GM13976 (cell line): ENCODE measurements at regions of chr7 and their contacts with region 1.

Region 1: GRCh38 chr7:27196287-27196767 is 3.6 kb downstream of the HOXA13 start:
- DNase-seq: peak; percentile 72
- CTCF ChIP-seq: peak; percentile 75

Region 2: DNA sequence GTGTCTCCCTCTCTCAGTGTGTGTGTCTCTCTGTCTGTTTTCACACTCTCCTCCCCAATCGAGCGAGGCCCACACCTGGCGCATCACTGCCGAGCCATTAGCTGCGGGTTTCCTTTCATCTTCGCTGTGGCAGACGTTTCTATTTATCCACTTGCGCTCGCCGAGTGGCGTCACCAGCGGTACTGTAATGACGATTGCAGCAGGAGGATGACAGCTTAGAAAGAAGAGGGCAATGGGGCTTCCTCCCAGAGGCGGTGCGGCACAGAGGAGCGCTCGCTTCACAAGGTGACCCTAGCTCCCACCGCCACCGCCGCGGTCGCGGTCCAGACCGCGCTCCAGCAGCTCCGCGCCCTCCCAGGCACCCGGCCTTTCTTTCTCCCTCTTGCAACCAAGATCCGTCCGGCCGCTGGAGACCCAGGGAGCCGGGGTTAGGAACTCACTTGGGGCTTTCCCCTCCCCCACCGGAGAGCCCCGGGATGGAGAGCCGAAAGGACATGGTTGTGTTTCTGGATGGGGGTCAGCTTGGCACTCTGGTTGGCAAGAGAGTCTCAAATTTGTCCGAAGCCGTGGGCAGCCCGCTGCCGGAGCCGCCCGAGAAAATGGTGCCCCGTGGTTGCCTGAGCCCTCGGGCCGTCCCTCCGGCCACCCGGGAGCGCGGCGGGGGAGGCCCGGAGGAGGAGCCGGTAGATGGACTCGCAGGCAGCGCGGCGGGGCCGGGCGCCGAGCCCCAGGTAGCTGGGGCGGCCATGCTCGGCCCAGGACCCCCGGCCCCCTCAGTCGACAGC is 46.4 kb after region 1 on chr7 and contains the start of gene EVX1:
- in situ Hi-C with region 1: loop called (anchors 10 kb)
- DNase-seq: no peak
- CTCF ChIP-seq: no peak

Region 3: DNA sequence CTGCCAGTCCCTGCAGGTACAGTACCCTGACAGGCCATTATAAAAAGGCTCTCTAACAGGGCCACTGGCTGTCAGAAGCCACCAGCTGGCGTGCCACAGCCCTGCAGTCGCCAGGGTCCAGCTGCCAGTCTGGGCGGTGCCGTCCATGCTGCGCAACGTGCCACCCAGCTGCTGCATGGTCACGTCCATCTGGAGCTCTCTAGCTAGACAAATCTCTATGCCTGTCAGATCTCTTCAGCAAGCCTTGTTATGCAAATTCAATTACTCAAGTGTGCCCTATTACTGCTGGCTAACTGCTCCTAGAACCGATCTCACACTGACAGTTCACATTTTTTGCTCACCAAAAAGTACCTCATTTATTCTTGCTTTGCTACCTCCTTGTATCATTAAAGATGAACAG is 390.5 kb after region 1 on chr7:
- in situ Hi-C with region 1: loop called (anchors 10 kb)
- DNase-seq: peak; percentile 60
- CTCF ChIP-seq: no peak

Region 4: DNA sequence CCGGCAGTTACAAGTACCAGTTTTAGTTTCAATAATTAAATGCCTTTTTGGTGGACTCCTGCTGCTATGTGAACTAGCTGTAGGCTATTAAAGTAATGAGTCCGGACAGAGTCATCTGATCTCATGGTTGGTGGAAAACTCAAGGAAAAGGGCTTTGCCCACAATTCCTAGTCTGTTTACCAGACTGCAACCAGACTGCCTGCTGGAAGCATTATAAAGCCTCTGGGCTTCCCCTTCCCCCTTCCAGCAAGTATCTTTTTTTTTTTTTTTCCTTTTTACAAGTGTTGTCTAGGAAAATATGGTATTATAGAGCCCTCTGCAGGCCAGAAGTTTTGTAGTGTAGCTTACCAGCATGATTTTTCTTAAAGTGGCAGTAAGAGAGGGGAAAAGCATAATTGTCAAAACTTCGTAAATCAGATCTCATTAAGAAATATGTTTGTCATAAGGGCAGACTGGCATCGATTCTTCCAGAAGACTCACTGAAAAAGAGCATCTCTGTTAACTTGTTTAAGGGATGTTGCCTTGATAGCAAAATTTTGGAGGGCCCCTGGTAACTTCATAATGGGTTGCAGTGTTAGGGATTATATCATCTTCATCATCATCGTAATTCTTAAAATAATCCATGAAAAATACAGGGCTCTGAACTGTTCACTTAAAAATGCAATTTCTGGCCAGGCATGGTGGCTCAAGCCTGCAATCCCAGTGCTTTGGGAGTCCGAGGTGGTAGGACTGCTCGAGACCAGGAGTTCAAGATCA is 724.9 kb after region 1 on chr7:
- in situ Hi-C with region 1: loop called (anchors 10 kb)
- DNase-seq: peak; percentile 49
- CTCF ChIP-seq: no peak